Gastrocnemius medialis (tissue), 4 donors: ENCODE measurements at regions of chr17 and their contacts with region 1.

Region 1: DNA sequence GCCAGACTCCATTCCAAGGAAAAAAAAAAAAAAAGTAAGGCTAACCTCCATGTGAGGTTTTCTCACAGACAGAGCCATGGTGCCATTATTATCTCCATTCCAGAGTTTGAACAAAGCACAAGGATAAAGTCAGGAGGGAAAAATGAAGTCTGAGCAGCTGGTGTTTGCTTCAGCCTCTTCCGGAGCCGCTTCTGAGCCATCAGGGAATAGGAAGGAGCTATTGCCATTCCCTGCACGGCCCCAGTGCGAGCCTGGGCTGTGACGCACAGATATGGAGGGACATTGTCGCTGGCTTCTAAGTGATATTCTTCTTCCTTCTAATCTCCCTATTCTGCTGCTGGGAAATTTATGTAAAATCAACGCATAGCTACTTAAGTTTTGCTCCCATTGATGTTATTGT is 69.5 kb upstream of the PIRT start:
- DNase-seq: no peak
- ATAC-seq: no peak
- H3K4me3 ChIP-seq: no peak overlapping the region
- H3K27ac ChIP-seq: no peak overlapping the region
- H3K4me1 ChIP-seq: no peaks in the 10 kb centered on the region
- H3K27me3 ChIP-seq: no peaks in the 10 kb centered on the region
- CTCF ChIP-seq: no peak
- POLR2A ChIP-seq: no peak

Region 2: DNA sequence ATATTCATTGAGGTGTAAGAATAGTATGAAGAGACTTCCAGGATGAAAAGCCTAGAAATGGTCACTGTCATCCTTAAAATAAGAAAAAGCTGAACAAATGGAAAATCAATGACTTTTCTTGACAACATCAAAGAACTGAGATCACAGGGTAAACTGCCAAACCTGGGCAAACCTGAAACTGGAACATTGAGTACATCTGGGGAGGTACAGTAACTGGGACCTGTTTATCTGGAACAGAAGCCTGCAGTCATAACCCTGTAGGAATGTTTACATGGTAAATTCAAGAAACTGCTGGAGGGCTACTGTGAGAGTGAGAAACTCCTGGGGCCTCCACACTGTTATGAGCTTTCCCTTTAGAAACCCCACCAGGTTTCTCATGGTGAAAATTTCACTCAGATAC is 60.6 kb after region 1 on chr17:
- in situ Hi-C with region 1: loop called in 1 of 4 experiments (anchors 10 kb)
- intact Hi-C with region 1: no loop called
- DNase-seq: no peak
- ATAC-seq: no peak
- H3K4me3 ChIP-seq: no peak overlapping the region
- H3K27ac ChIP-seq: no peak overlapping the region
- H3K4me1 ChIP-seq: no peaks in the 10 kb centered on the region
- H3K27me3 ChIP-seq: no peaks in the 10 kb centered on the region
- CTCF ChIP-seq: no peak
- POLR2A ChIP-seq: no peak

Region 3: GRCh38 chr17:11122908-11123307 is 215.5 kb after region 1 on chr17:
- in situ Hi-C with region 1: loop called in 1 of 4 experiments (anchors 25 kb)
- intact Hi-C with region 1: no loop called
- DNase-seq: no peak
- ATAC-seq: no peak
- H3K4me3 ChIP-seq: no peak overlapping the region
- H3K27ac ChIP-seq: no peak overlapping the region
- H3K4me1 ChIP-seq: no peaks in the 10 kb centered on the region
- H3K27me3 ChIP-seq: no peaks in the 10 kb centered on the region
- CTCF ChIP-seq: no peak
- POLR2A ChIP-seq: no peak